Activated T-helper 2 cell treated with anti-CD3 and anti-CD28 coated beads, Interferon-gamma antibody, Interleukin-2, Interleukin-4, amounts not matched to agents 10 μg/mL and 5 μg/mL and 100 μg/mL, durations not matched to agents 14 hours and 24 hours and 36 hours (primary cell): ENCODE measurements at regions of chr5 and their contacts with region 1.

Region 1: DNA sequence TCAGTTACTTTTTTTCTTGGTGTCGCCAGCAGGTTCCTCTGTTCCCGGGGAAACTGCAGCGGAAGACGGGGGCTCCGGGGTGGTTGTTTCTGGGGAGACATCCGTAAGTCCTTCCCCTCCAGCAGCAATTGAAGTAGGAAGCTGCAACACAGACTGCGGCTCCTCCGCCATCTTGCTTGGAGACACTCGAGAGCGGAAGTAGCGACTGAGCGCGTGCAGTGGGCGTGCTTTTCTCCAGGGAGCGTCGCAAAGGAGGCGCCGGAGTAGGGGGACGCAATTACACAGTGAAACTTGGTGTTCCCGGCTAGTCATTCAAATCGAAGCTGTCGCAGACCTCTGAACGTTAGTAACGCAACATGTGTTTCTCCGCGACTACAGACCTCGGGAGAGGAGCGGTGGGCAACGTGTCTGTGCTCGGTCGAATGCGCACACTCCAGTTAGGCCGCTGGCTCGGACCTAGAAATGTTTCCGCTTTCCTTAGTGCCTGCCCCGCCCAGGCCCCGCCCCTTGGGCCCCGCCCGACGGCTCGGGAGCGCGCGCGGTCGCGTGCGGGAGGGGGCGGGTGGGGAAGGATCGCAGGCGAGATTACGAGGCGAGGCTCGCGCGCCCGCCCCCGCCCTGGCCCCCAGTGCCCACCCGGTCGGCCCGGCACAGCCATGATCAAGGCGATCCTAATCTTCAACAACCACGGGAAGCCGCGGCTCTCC is at the starts of genes AP3S1 and ATG12:
- DNase-seq: peak; percentile 87
- H3K4me3 Mint-ChIP-seq: peak within 1 kb of the TSS; percentile 97
- H3K27ac Mint-ChIP-seq: peak within 1 kb of the TSS; percentile 99
- H3K4me1 Mint-ChIP-seq: peaks cover 42% of the 10 kb centered on the region
- H3K27me3 Mint-ChIP-seq: peaks cover 2% of the 10 kb centered on the region
- total RNA-seq, gene AP3S1: 69.0 and 74.8 TPM in 2 replicates
- total RNA-seq, gene ATG12: 33.8 and 34.5 TPM in 2 replicates

Region 2: DNA sequence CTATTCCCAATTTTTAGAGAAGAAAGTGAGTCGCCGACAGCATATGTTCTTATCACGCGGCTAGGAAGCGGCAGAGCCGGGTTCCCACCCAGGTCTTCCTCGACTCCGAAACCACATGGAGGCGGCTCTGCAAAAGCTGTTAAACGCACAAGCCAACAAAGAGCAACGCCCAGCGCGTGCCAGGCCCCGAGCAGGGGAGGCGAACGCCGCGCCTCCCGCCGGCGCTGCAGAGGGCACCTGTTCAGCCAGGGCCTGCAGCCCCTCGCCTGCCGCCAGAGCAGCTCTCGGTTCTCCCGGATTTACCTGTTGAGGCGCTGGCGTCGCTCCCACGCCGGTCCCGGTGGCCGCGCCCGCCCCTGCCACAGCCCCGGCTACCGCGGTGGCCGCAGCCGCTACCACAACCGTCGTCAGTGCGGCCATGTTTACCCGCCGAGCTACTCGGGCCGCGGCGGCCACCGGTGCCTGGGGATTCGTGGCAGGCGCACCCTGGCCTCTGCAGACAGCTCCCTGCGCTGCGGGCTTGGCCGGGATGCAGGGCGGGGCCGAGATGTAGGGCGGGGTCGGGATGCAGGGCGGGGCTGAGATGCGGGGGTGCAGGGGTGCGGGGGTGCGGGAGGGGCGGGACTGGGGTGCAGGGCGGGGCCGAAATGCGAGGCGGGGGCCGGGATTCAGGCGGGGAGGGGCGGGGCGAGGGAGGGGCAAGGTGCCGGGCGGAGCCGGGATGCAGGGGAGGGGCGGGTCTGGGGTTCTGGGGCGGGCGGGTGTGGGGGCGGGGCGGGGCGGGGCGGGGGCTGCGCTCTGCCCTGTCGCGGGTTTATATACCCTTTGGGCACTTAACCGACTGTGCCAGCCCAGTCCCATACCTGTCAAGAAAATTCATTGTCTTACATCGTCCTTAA is 545.2 kb before region 1 on chr5 and contains the start of gene CCDC112:
- intact Hi-C with region 1: loop called (anchors 5 kb)
- DNase-seq: peak; percentile 57
- H3K4me3 Mint-ChIP-seq: peak within 1 kb of the TSS; percentile 82
- H3K27ac Mint-ChIP-seq: no peak within 1 kb of the TSS
- H3K4me1 Mint-ChIP-seq: peaks cover 5% of the 10 kb centered on the region
- H3K27me3 Mint-ChIP-seq: peaks cover 55% of the 10 kb centered on the region
- total RNA-seq, gene CCDC112: 0.32 and 0.34 TPM in 2 replicates

Region 3: DNA sequence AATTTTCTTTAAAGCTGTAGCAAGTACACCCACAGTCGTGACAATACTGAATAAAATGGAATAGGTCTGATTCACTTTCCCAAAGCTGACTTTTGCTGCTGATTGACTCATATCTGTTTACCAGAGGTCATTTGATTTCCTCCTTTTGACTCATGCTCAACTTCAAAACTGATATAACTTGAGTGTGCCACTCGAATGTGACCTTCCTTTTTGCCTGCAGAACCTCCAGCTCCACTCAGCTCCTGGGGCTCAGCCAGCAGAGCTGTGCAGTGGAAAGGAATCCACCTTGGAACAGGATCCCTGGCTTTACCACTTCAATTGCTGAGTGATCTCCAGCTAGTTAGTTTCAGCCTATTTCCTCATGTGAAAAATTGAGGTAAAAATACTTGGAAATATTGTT is 381.1 kb before region 1 on chr5:
- intact Hi-C with region 1: loop called (anchors 5 kb)
- DNase-seq: no peak
- H3K4me3 Mint-ChIP-seq: no peak overlapping the region
- H3K27ac Mint-ChIP-seq: no peak overlapping the region
- H3K4me1 Mint-ChIP-seq: peaks cover 6% of the 10 kb centered on the region
- H3K27me3 Mint-ChIP-seq: peaks cover 34% of the 10 kb centered on the region

Region 4: DNA sequence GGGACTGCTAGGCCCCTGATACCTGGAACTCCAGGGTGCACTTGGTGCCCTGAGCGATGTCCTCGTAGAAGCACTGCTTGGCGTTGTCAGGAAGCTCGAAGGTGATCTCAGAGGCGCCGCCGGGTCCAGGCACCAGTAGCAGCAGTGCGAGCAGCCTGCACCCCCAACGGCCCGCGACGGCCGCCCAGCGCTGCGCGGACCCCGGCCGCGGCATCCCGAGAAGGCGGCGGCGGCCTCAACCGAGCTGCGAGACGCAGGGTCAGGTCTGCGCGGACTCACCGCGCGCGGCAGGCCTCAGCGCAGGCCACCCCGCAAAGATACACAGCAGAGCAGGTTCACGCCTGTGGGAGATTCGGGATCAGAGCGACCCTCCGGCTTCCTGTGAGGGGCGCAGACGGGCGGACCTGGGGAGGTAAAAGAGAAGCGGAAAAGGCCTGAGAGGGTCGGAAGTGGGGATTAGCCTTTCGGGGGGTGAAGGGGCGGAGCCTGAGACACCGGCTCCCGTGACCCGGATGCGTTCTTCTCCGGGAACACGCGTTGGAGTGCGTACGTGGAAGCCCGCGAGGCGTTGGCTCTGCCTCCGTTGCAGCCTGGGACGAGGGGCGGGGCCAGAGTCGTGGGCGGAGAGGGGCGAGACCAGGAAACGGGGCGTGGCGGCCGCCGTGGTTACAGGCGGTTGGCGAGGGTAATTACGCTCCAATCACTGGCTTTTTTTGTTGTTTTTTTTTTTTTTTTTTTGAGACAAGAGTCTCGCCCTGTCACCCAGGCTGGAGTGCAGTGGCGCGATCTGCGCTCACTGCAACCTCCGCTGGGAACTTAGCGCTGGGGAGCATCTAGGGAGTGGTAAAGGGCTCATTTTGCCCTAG is 215.7 kb before region 1 on chr5 and contains the start of gene TMED7:
- intact Hi-C with region 1: loop called (anchors 1 kb)
- DNase-seq: peak; percentile 98
- H3K4me3 Mint-ChIP-seq: no peak within 1 kb of the TSS
- H3K27ac Mint-ChIP-seq: peak within 1 kb of the TSS; percentile 89
- H3K4me1 Mint-ChIP-seq: peaks cover 20% of the 10 kb centered on the region
- H3K27me3 Mint-ChIP-seq: peaks cover 13% of the 10 kb centered on the region
- total RNA-seq, gene TMED7: 40.2 and 40.9 TPM in 2 replicates

Region 5: DNA sequence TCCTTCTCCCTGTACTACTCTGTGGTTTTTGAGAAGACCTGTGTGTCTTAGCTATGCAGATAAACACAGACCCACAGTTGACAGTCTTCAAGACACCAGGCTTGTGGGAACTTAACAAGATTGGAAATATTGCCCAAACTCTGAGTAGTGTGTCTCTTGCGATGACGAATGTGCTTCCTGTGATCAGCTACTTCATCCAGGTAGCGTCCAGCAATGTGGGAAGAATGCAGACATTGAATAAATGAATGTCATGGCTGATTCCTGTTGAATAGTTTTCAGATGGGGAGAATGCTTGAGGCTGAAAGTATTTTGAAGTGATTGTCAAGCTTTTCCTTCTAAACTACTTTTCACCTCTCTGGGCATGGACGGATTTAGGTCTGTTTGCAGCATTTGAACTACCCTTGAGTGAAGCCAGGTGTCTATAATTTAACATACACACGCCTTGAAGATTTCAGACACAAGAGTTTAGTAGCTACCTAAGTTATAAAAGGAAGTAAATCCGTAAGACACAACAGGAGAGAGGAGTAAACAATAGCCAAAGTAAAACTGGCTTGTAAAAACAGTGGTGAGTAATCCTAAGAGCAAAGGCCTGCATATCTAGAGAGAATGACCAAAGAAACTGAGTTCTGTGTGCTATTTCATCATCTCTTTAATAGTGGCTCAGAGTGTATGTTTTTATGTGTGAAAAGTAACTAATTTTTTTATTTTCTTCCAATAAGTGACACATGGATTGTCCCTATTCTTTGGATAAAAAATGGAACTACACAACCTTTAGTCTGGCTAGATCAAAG is 160.8 kb after region 1 on chr5:
- intact Hi-C with region 1: no loop called
- DNase-seq: no peak
- H3K4me3 Mint-ChIP-seq: no peak overlapping the region
- H3K27ac Mint-ChIP-seq: no peak overlapping the region
- H3K4me1 Mint-ChIP-seq: no peaks in the 10 kb centered on the region
- H3K27me3 Mint-ChIP-seq: no peaks in the 10 kb centered on the region

Region 6: GRCh38 chr5:116068028-116068632 is 226.6 kb after region 1 on chr5:
- intact Hi-C with region 1: loop called (anchors 5 kb)
- DNase-seq: no peak
- H3K4me3 Mint-ChIP-seq: no peak overlapping the region
- H3K27ac Mint-ChIP-seq: no peak overlapping the region
- H3K4me1 Mint-ChIP-seq: no peaks in the 10 kb centered on the region
- H3K27me3 Mint-ChIP-seq: peaks cover 55% of the 10 kb centered on the region

Region 7: DNA sequence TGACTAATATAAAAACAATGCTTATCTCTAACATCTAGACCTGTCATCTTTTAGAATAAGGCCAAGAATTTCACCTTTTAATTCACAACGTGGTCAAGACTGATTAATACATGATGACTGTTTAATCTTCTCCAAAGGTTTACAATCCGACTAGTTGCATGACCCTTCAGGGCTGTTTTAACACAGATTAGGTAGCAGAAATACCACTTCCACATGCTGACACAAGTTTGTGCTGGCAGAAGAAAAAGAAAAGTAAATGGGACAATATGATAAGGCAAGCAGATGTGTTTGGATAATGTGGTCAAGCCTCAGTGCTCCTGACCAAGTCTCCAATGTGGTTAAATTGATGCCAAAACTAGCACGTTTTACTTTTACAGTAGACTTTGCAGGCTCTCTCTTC is 702.0 kb after region 1 on chr5:
- intact Hi-C with region 1: no loop called
- DNase-seq: no peak
- H3K4me3 Mint-ChIP-seq: no peak overlapping the region
- H3K27ac Mint-ChIP-seq: no peak overlapping the region
- H3K4me1 Mint-ChIP-seq: no peaks in the 10 kb centered on the region
- H3K27me3 Mint-ChIP-seq: no peaks in the 10 kb centered on the region